Activated CD8-positive, alpha-beta T cell treated with anti-CD3 and anti-CD28 coated beads for 36 hours (primary cell): ENCODE measurements at regions of chr10 and their contacts with region 1.

Region 1: DNA sequence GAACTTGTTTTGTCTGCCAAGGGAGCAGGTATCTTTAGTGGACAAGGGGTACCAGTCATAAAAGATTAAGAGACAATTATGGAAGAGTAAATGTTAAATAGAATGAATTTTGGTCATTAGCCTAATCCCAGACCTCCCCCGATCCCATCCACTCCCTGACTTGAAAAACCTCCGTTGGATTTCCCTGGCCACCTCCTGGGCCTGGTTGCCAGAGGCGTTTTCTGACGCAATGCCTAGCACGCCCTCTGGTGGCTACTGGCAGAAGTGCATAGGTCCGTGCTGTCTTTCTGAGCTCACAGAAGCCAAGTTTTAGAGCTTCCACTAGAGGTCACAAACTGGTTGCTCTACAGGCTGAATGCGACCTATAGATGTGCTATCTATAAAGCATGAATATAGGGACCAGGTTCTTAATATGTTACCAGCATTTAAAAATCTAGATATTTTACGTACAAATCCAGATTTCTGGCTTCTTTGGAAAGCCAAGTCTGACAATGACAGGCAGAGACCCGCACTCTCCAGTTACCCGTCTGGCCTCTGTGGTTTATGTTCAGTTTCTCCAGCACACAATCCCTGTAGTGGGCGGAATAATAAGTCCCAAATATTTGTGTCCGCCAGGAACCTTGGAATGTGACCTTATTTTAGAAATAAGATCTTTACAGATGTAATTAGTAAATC is 39.8 kb downstream of the SPOCK2 start:
- DNase-seq: peak; percentile 95
- ATAC-seq: peak; percentile 98
- H3K4me3 Mint-ChIP-seq: no peak overlapping the region
- H3K27ac Mint-ChIP-seq: no peak overlapping the region
- H3K4me1 Mint-ChIP-seq: peaks cover 15% of the 10 kb centered on the region
- H3K27me3 Mint-ChIP-seq: no peaks in the 10 kb centered on the region
- CTCF ChIP-seq: peak; percentile 97

Region 2: GRCh38 chr10:71933651-71934050 is 114.9 kb before region 1 on chr10:
- CTCF ChIA-PET with region 1: interaction called, 19 read pairs
- POLR2A ChIA-PET with region 1: no interaction called
- intact Hi-C with region 1: no loop called
- DNase-seq: peak; percentile 89
- ATAC-seq: peak; percentile 91
- H3K4me3 Mint-ChIP-seq: no peak overlapping the region
- H3K27ac Mint-ChIP-seq: peak overlapping the region; percentile 65
- H3K4me1 Mint-ChIP-seq: peaks cover 27% of the 10 kb centered on the region
- H3K27me3 Mint-ChIP-seq: no peaks in the 10 kb centered on the region
- CTCF ChIP-seq: no peak

Region 3: DNA sequence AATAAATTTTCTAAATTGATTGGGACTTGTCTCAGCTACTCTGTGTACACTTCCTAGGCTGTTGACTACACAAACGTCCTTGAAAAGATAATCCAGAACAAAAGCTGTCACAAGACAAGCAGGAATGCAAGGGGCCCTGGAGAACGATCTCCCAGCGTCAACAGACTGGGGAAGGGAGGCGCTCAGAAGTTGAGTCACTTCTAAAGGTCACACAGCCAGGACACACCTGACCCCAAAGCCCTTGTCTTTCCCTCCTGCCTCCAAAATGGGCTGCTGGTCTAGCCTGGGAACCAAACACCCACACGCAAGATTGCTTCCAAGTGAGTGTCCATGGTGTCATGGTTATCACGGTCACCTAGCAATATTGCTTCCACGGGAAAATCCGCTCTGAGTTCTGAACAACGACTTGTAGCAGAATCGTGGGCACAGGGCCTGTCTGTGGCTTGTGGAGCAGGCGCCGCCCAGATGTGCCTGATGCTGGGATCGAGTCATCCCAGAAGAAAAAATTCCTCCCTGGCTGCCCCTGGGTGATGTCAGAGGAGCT is 10.1 kb before region 1 on chr10:
- CTCF ChIA-PET with region 1: interaction called, 19 read pairs
- POLR2A ChIA-PET with region 1: no interaction called
- intact Hi-C with region 1: no loop called
- DNase-seq: no peak
- ATAC-seq: no peak
- H3K4me3 Mint-ChIP-seq: no peak overlapping the region
- H3K27ac Mint-ChIP-seq: no peak overlapping the region
- H3K4me1 Mint-ChIP-seq: no peaks in the 10 kb centered on the region
- H3K27me3 Mint-ChIP-seq: no peaks in the 10 kb centered on the region
- CTCF ChIP-seq: no peak

Region 4: GRCh38 chr10:72079356-72079755 is 30.8 kb after region 1 on chr10:
- CTCF ChIA-PET with region 1: interaction called, 17 read pairs
- POLR2A ChIA-PET with region 1: interaction called, 3 read pairs
- intact Hi-C with region 1: no loop called
- DNase-seq: peak; percentile 90
- ATAC-seq: peak; percentile 64
- H3K4me3 Mint-ChIP-seq: peak overlapping the region; percentile 58
- H3K27ac Mint-ChIP-seq: peak overlapping the region; percentile 95
- H3K4me1 Mint-ChIP-seq: peaks cover 91% of the 10 kb centered on the region
- H3K27me3 Mint-ChIP-seq: no peaks in the 10 kb centered on the region
- CTCF ChIP-seq: no peak

Region 5: DNA sequence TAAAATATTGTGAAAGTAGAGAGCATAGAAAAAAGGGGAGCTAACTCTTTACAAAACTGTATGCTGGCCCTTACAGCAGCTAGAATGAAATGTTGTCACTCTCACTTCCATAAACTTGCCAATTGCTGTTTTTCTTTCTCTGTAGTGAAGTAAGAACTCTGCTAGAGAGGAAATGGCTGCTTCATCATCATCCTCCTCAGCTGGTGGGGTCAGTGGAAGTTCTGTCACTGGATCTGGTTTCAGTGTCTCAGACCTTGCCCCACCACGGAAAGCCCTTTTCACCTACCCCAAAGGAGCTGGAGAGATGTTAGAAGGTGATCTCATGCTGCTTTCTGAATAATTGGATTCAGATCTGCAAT is 175.1 kb after region 1 on chr10:
- CTCF ChIA-PET with region 1: interaction called, 30 read pairs
- POLR2A ChIA-PET with region 1: no interaction called
- intact Hi-C with region 1: no loop called
- DNase-seq: peak; percentile 59
- ATAC-seq: peak; percentile 54
- H3K4me3 Mint-ChIP-seq: peak overlapping the region; percentile 4
- H3K27ac Mint-ChIP-seq: peak overlapping the region; percentile 91
- H3K4me1 Mint-ChIP-seq: peaks cover 52% of the 10 kb centered on the region
- H3K27me3 Mint-ChIP-seq: no peaks in the 10 kb centered on the region
- CTCF ChIP-seq: no peak